ENCODE measurements at regions of chr1 and their contacts with region 1.

Region 1: GRCh38 chr1:39196244-39197215 is 8.0 kb upstream of the MACF1 start:
- DNase-seq: peak; percentile 87
- H3K4me3 Mint-ChIP-seq: peak overlapping the region; percentile 80
- H3K27ac Mint-ChIP-seq: peak overlapping the region; percentile 96
- H3K4me1 Mint-ChIP-seq: peaks cover 66% of the 10 kb centered on the region
- H3K27me3 Mint-ChIP-seq: no peaks in the 10 kb centered on the region

Region 2: GRCh38 chr1:39105061-39105840 is 91.3 kb before region 1 on chr1:
- intact Hi-C with region 1: loop called (anchors 1 kb)
- DNase-seq: peak; percentile 92
- H3K4me3 Mint-ChIP-seq: no peak overlapping the region
- H3K27ac Mint-ChIP-seq: peak overlapping the region; percentile 48
- H3K4me1 Mint-ChIP-seq: peaks cover 32% of the 10 kb centered on the region
- H3K27me3 Mint-ChIP-seq: peaks cover 8% of the 10 kb centered on the region

Region 3: GRCh38 chr1:39183503-39184353 is 12.8 kb before region 1 on chr1:
- intact Hi-C with region 1: loop called (anchors 1 kb)
- DNase-seq: peak; percentile 94
- H3K4me3 Mint-ChIP-seq: peak overlapping the region; percentile 74
- H3K27ac Mint-ChIP-seq: peak overlapping the region; percentile 97
- H3K4me1 Mint-ChIP-seq: peaks cover 45% of the 10 kb centered on the region
- H3K27me3 Mint-ChIP-seq: no peaks in the 10 kb centered on the region

Region 4: GRCh38 chr1:39258146-39258924 is 61.8 kb after region 1 on chr1:
- intact Hi-C with region 1: loop called (anchors 1 kb)
- DNase-seq: peak; percentile 88
- H3K4me3 Mint-ChIP-seq: no peak overlapping the region
- H3K27ac Mint-ChIP-seq: peak overlapping the region; percentile 57
- H3K4me1 Mint-ChIP-seq: peaks cover 21% of the 10 kb centered on the region
- H3K27me3 Mint-ChIP-seq: no peaks in the 10 kb centered on the region

Measured in activated CD4-positive, alpha-beta T cell treated with anti-CD3 and anti-CD28 coated beads, Interleukin-2, amount 10 ng/mL, durations not matched to agents 24 days and 14 days (primary cell).